ENCODE measurements at regions of chr12 and their contacts with region 1.

Region 1: GRCh38 chr12:45728630-45729232 is 775 bp upstream of the ARID2 start:
- DNase-seq: peak; percentile 97
- ATAC-seq: peak; percentile 68
- H3K4me3 Mint-ChIP-seq: peak overlapping the region; percentile 92
- H3K27ac Mint-ChIP-seq: peak overlapping the region; percentile 99
- H3K4me1 Mint-ChIP-seq: peaks cover 41% of the 10 kb centered on the region
- H3K27me3 Mint-ChIP-seq: no peaks in the 10 kb centered on the region
- CTCF ChIP-seq: peak; percentile 60

Region 2: GRCh38 chr12:45215419-45216229 is 513.1 kb before region 1 on chr12 and contains the start of gene ANO6:
- CTCF ChIA-PET with region 1: no interaction called
- POLR2A ChIA-PET with region 1: interaction called, 8 read pairs
- intact Hi-C with region 1: loop called (anchors 1 kb)
- DNase-seq: peak; percentile 74
- ATAC-seq: peak; percentile 74
- H3K4me3 Mint-ChIP-seq: peak within 1 kb of the TSS; percentile 95
- H3K27ac Mint-ChIP-seq: peak within 1 kb of the TSS; percentile 90
- H3K4me1 Mint-ChIP-seq: peaks cover 45% of the 10 kb centered on the region
- H3K27me3 Mint-ChIP-seq: no peaks in the 10 kb centered on the region
- CTCF ChIP-seq: no peak
- total RNA-seq, gene ANO6: 14.8 and 16.3 TPM in 2 replicates

Region 3: GRCh38 chr12:45575823-45576475 is 152.8 kb before region 1 on chr12:
- CTCF ChIA-PET with region 1: interaction called, 3 read pairs
- POLR2A ChIA-PET with region 1: interaction called, 19 read pairs
- intact Hi-C with region 1: loop called (anchors 1 kb)
- DNase-seq: no peak
- ATAC-seq: peak; percentile 76
- H3K4me3 Mint-ChIP-seq: peak overlapping the region; percentile 61
- H3K27ac Mint-ChIP-seq: peak overlapping the region; percentile 78
- H3K4me1 Mint-ChIP-seq: peaks cover 44% of the 10 kb centered on the region
- H3K27me3 Mint-ChIP-seq: no peaks in the 10 kb centered on the region
- CTCF ChIP-seq: no peak

Region 4: DNA sequence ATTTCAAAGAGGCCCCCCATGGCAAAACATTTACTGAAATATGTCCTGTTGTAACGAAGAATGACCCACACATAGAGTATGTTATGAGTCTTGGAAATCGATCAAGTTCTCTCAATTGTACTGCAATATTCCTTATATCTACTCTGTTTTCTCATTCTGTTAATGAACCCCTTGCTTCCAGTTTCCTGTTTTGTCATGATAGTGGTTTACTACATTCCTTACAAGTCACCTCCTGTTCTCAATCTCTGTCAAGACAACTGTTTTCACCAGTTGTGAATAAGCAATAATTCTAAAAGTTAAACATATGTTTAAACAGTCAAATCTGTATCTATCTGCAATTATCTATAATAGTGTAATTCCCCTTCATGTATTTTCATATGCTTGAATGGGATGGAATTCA is 15.7 kb before region 1 on chr12:
- CTCF ChIA-PET with region 1: interaction called, 9 read pairs
- POLR2A ChIA-PET with region 1: interaction called, 6 read pairs
- intact Hi-C with region 1: loop called (anchors 1 kb)
- DNase-seq: no peak
- ATAC-seq: no peak
- H3K4me3 Mint-ChIP-seq: no peak overlapping the region
- H3K27ac Mint-ChIP-seq: no peak overlapping the region
- H3K4me1 Mint-ChIP-seq: peaks cover 20% of the 10 kb centered on the region
- H3K27me3 Mint-ChIP-seq: no peaks in the 10 kb centered on the region
- CTCF ChIP-seq: no peak

Region 5: GRCh38 chr12:45789025-45789424 is 60.3 kb after region 1 on chr12:
- CTCF ChIA-PET with region 1: no interaction called
- POLR2A ChIA-PET with region 1: interaction called, 5 read pairs
- intact Hi-C with region 1: loop called (anchors 1 kb)
- DNase-seq: no peak
- ATAC-seq: peak; percentile 85
- H3K4me3 Mint-ChIP-seq: no peak overlapping the region
- H3K27ac Mint-ChIP-seq: no peak overlapping the region
- H3K4me1 Mint-ChIP-seq: peaks cover 14% of the 10 kb centered on the region
- H3K27me3 Mint-ChIP-seq: no peaks in the 10 kb centered on the region
- CTCF ChIP-seq: no peak

Region 6: GRCh38 chr12:47391566-47391965 is 1662.8 kb after region 1 on chr12:
- CTCF ChIA-PET with region 1: no interaction called
- POLR2A ChIA-PET with region 1: interaction called, 12 read pairs
- intact Hi-C with region 1: no loop called
- DNase-seq: no peak
- ATAC-seq: peak; percentile 45
- H3K4me3 Mint-ChIP-seq: peak overlapping the region; percentile 15
- H3K27ac Mint-ChIP-seq: peak overlapping the region; percentile 100
- H3K4me1 Mint-ChIP-seq: peaks cover 83% of the 10 kb centered on the region
- H3K27me3 Mint-ChIP-seq: no peaks in the 10 kb centered on the region
- CTCF ChIP-seq: no peak